Calu3 (cell line): ENCODE measurements at regions of chr17 and their contacts with region 1.

Region 1: GRCh38 chr17:38982858-38983746 is 15.9 kb upstream of the FBXO47 start:
- DNase-seq: peak; percentile 85
- H3K4me3 Mint-ChIP-seq: no peak overlapping the region
- H3K27ac Mint-ChIP-seq: no peak overlapping the region
- H3K4me1 Mint-ChIP-seq: no peaks in the 10 kb centered on the region
- H3K27me3 Mint-ChIP-seq: peaks cover 44% of the 10 kb centered on the region
- CTCF ChIP-seq: peak; percentile 98

Region 2: GRCh38 chr17:37067555-37068111 is 1915.5 kb before region 1 on chr17:
- CTCF ChIA-PET with region 1: interaction called, 18 read pairs
- intact Hi-C with region 1: no loop called
- DNase-seq: peak; percentile 94
- H3K4me3 Mint-ChIP-seq: peak overlapping the region; percentile 38
- H3K27ac Mint-ChIP-seq: peak overlapping the region; percentile 12
- H3K4me1 Mint-ChIP-seq: peaks cover 19% of the 10 kb centered on the region
- H3K27me3 Mint-ChIP-seq: peaks cover 47% of the 10 kb centered on the region
- CTCF ChIP-seq: no peak

Region 3: GRCh38 chr17:38428112-38428642 is 554.9 kb before region 1 on chr17 and contains the start of gene ARHGAP23:
- CTCF ChIA-PET with region 1: no interaction called
- intact Hi-C with region 1: no loop called
- DNase-seq: peak; percentile 78
- H3K4me3 Mint-ChIP-seq: peak within 1 kb of the TSS; percentile 70
- H3K27ac Mint-ChIP-seq: peak within 1 kb of the TSS; percentile 56
- H3K4me1 Mint-ChIP-seq: peaks cover 14% of the 10 kb centered on the region
- H3K27me3 Mint-ChIP-seq: peaks cover 68% of the 10 kb centered on the region
- CTCF ChIP-seq: peak; percentile 11
- total RNA-seq, gene ARHGAP23: 140 and 304 TPM in 2 replicates

Region 4: GRCh38 chr17:38908676-38909181 is 74.4 kb before region 1 on chr17:
- CTCF ChIA-PET with region 1: no interaction called
- intact Hi-C with region 1: no loop called
- DNase-seq: no peak
- H3K4me3 Mint-ChIP-seq: no peak overlapping the region
- H3K27ac Mint-ChIP-seq: no peak overlapping the region
- H3K4me1 Mint-ChIP-seq: peaks cover 11% of the 10 kb centered on the region
- H3K27me3 Mint-ChIP-seq: no peaks in the 10 kb centered on the region
- CTCF ChIP-seq: no peak

Region 5: DNA sequence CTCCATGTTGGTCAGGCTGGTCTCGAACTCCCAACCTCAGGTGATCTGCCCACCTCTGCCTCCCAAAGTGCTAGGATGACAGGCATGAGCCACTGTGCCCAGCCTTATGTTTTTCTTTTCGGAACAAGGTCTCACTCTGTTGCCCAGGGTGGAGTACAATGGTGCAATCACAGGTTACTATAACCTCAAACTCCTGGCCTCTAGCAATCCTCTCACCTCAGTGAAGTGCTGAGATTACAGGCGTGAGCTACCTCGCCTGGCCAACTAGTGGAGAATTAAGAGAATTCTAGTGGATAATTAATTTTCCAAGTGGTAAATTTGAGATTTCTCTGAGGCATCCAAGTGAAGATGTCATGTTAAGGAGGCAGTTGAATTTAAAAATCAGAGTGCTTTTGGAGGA is 13.0 kb before region 1 on chr17:
- CTCF ChIA-PET with region 1: interaction called, 48 read pairs
- intact Hi-C with region 1: no loop called
- DNase-seq: no peak
- H3K4me3 Mint-ChIP-seq: no peak overlapping the region
- H3K27ac Mint-ChIP-seq: no peak overlapping the region
- H3K4me1 Mint-ChIP-seq: no peaks in the 10 kb centered on the region
- H3K27me3 Mint-ChIP-seq: peaks cover 36% of the 10 kb centered on the region
- CTCF ChIP-seq: no peak

Region 6: GRCh38 chr17:39026980-39027451 is 43.9 kb after region 1 on chr17:
- CTCF ChIA-PET with region 1: interaction called, 30 read pairs
- intact Hi-C with region 1: no loop called
- DNase-seq: peak; percentile 83
- H3K4me3 Mint-ChIP-seq: peak overlapping the region; percentile 70
- H3K27ac Mint-ChIP-seq: no peak overlapping the region
- H3K4me1 Mint-ChIP-seq: peaks cover 7% of the 10 kb centered on the region
- H3K27me3 Mint-ChIP-seq: peaks cover 70% of the 10 kb centered on the region
- CTCF ChIP-seq: no peak

Region 7: DNA sequence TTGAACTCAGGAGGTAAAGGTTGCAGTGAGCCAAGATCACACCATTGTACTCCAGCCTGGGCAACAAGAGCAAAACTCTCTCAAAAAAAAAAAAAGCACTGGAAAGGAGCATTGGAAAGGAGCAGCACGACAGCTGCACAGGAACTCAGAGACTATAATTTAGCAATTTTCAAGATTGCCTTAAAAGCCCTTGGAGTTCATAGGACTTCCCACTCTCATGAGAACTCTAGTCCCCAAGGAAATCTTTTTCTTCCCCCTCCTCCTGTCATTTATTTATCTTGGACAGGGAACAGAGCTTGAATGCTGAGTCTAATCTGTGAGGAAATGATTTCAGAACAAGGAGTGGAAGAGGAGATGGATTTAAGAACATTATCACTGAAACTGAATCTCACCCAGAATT is 99.4 kb after region 1 on chr17:
- CTCF ChIA-PET with region 1: interaction called, 11 read pairs
- intact Hi-C with region 1: loop called (anchors 5 kb)
- DNase-seq: no peak
- H3K4me3 Mint-ChIP-seq: no peak overlapping the region
- H3K27ac Mint-ChIP-seq: no peak overlapping the region
- H3K4me1 Mint-ChIP-seq: no peaks in the 10 kb centered on the region
- H3K27me3 Mint-ChIP-seq: peaks cover 87% of the 10 kb centered on the region
- CTCF ChIP-seq: no peak

Region 8: GRCh38 chr17:39164675-39165143 is 181.6 kb after region 1 on chr17:
- CTCF ChIA-PET with region 1: interaction called, 49 read pairs
- intact Hi-C with region 1: no loop called
- DNase-seq: peak; percentile 99
- H3K4me3 Mint-ChIP-seq: peak overlapping the region; percentile 6
- H3K27ac Mint-ChIP-seq: no peak overlapping the region
- H3K4me1 Mint-ChIP-seq: peaks cover 12% of the 10 kb centered on the region
- H3K27me3 Mint-ChIP-seq: peaks cover 80% of the 10 kb centered on the region
- CTCF ChIP-seq: peak; percentile 100

Region 9: GRCh38 chr17:39235555-39236449 is 252.7 kb after region 1 on chr17:
- CTCF ChIA-PET with region 1: interaction called, 16 read pairs
- intact Hi-C with region 1: no loop called
- DNase-seq: peak; percentile 88
- H3K4me3 Mint-ChIP-seq: no peak overlapping the region
- H3K27ac Mint-ChIP-seq: no peak overlapping the region
- H3K4me1 Mint-ChIP-seq: peaks cover 49% of the 10 kb centered on the region
- H3K27me3 Mint-ChIP-seq: peaks cover 28% of the 10 kb centered on the region
- CTCF ChIP-seq: peak; percentile 100